HCT116 (cell line): ENCODE measurements at regions of chr7 and their contacts with region 1.

Region 1: DNA sequence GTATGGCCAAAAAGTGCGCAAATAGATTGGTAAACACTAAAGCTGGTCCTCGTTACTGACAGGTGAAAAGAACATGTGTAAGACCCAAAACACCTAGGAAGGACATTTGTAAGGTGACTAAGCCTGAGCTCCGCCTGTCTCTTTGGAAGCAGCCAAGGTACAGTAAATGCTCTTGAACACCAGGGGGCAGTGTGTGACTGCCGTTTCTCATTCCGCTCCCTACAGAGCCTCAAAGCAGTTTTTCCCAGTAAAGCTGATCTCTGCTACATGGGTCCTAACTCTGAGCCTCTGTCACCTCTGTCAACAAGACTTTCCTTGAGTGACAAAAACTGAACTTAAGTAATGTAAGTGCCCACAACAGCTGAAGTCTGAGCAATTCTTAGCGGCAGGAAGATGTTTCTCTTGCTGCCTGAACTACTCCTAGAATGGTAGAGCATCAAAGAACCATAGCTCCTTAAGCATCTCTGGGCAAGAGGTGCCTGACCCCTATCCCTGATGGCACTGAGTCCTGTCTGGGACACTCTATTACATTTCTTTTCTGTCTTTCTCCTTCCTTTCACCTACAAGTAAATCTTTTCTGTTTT is 238.0 kb upstream of the INHBA start:
- DNase-seq: peak; percentile 32
- ATAC-seq: peak; percentile 84
- H3K4me3 ChIP-seq: no peak overlapping the region
- H3K27ac ChIP-seq: no peak overlapping the region
- H3K4me1 ChIP-seq: no peaks in the 10 kb centered on the region
- H3K27me3 ChIP-seq: no peaks in the 10 kb centered on the region; the same call in 1 of the 2 replicates
- CTCF ChIP-seq: peak; percentile 55 to 87 (median 85); a peak in 5 of 6 replicates
- POLR2A ChIP-seq: no peak
- RAD21 ChIP-seq: peak; percentile 68

Region 2: DNA sequence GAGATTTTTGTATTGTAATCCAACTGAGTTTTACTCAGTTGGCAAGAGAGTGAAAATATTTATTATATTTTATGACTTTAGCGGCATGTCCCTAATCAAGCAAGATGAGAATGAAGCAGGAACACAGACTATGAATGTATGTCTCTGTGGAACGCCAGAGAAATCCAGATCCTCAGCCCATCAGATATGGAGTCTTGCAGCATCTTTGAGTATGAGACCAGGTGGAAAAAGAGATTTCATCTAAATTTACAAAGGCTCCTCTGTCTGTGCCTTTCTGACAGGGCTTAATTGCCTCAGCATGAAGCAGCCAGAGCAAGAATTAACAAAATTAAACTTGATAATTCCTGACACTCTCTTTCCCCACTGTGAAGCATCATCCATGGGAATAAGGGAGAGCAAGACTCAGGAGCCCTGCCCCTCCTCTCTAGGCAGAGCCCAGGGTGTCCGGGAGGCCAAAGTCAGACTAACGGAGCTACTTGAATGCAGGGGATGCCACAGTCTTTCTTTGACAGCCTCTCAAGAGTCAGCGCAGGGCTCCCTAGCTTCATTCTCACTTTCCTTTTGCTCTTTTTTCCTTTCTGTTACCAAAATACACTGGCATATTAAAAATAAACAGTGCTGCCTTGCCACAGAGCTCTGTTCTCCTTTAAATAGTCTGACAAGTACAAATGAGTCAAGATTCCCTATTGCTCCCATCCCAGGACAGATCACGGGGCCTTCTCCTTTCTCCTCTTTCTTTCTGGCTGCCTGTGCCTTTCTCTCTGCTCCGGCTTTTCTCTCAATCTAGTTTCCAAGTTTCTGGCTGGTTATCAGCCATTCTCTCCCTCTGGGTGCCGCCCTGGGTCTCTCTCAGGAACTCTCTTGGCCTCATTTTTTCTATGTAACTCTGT is 105.8 kb before region 1 on chr7:
- CTCF ChIA-PET with region 1: no interaction called
- POLR2A ChIA-PET with region 1: no interaction called
- RAD21 ChIA-PET with region 1: no interaction called
- intact Hi-C with region 1: no loop called
- DNase-seq: no peak
- ATAC-seq: no peak
- H3K4me3 ChIP-seq: no peak overlapping the region
- H3K27ac ChIP-seq: no peak overlapping the region
- H3K4me1 ChIP-seq: no peaks in the 10 kb centered on the region
- H3K27me3 ChIP-seq: no peaks in the 10 kb centered on the region
- CTCF ChIP-seq: no peak
- POLR2A ChIP-seq: no peak
- RAD21 ChIP-seq: no peak

Region 3: GRCh38 chr7:41955893-41956675 is 15.2 kb after region 1 on chr7:
- CTCF ChIA-PET with region 1: interaction called, 13 read pairs
- POLR2A ChIA-PET with region 1: no interaction called
- RAD21 ChIA-PET with region 1: no interaction called
- intact Hi-C with region 1: no loop called
- DNase-seq: no peak
- ATAC-seq: no peak
- H3K4me3 ChIP-seq: no peak overlapping the region
- H3K27ac ChIP-seq: no peak overlapping the region
- H3K4me1 ChIP-seq: no peaks in the 10 kb centered on the region
- H3K27me3 ChIP-seq: peaks cover 25% of the 10 kb centered on the region; the same call in 1 of the 2 replicates
- CTCF ChIP-seq: no peak
- POLR2A ChIP-seq: no peak
- RAD21 ChIP-seq: no peak

Region 4: GRCh38 chr7:42272793-42273665 is 332.2 kb after region 1 on chr7:
- CTCF ChIA-PET with region 1: no interaction called
- POLR2A ChIA-PET with region 1: no interaction called
- RAD21 ChIA-PET with region 1: no interaction called
- intact Hi-C with region 1: no loop called
- DNase-seq: no peak
- ATAC-seq: no peak
- H3K4me3 ChIP-seq: no peak overlapping the region
- H3K27ac ChIP-seq: no peak overlapping the region
- H3K4me1 ChIP-seq: no peaks in the 10 kb centered on the region
- H3K27me3 ChIP-seq: no peaks in the 10 kb centered on the region
- CTCF ChIP-seq: no peak
- POLR2A ChIP-seq: no peak
- RAD21 ChIP-seq: no peak

Region 5: GRCh38 chr7:42831718-42832431 is 891.0 kb after region 1 on chr7:
- CTCF ChIA-PET with region 1: interaction called, 13 read pairs
- POLR2A ChIA-PET with region 1: no interaction called
- RAD21 ChIA-PET with region 1: no interaction called
- intact Hi-C with region 1: no loop called
- DNase-seq: peak; percentile 7
- ATAC-seq: peak; percentile 82
- H3K4me3 ChIP-seq: no peak overlapping the region
- H3K27ac ChIP-seq: no peak overlapping the region
- H3K4me1 ChIP-seq: no peaks in the 10 kb centered on the region
- H3K27me3 ChIP-seq: peaks cover 53% of the 10 kb centered on the region
- CTCF ChIP-seq: peak; percentile 33 to 47 (median 46); a peak in 5 of 6 replicates
- POLR2A ChIP-seq: no peak
- RAD21 ChIP-seq: peak; percentile 61

Region 6: DNA sequence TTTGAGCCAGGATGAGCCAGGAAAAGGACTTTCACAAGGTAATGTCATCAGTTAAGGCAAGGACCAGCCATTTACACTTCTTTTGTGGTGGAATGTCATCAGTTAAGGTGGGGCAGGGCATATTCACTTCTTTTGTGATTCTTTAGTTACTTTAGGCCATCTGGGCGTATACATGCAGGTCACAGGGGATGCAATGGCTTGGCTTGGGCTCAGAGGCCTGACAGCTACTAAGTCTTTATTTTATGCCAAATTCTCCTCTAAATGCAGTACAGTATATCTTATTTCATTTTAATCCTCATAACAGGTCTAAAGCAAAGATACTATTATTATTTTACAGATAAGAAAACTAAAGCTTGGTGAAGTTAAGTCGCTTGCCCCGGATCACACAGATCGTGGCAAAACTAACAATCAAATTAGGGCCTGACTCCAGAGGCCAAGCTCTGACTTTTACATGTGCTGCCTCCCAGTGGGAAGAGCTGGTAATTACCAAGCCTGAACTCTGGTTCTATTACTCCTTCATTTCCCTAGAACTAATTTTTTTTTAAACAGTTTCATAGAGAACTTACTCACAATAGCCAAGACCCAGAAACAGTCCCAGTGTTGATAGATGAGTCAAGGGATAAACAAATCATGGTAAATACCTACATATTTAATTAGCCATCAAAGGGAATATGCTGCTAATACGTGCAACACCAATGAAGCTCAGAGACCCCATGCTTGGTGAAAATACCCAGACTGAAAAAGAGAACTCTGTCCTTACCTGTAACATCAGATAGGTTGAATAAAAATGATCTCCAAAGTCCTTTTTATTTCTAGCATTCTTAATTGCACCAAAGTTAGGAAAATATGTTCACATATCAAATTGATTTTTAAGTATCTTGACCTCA is 935.6 kb after region 1 on chr7:
- CTCF ChIA-PET with region 1: interaction called, 42 read pairs
- POLR2A ChIA-PET with region 1: interaction called, 3 read pairs
- RAD21 ChIA-PET with region 1: interaction called in 1 of 2 experiments, 4 read pairs
- intact Hi-C with region 1: loop called (anchors 2 kb)
- DNase-seq: peak; percentile 43
- ATAC-seq: peak; percentile 84
- H3K4me3 ChIP-seq: no peak overlapping the region
- H3K27ac ChIP-seq: no peak overlapping the region
- H3K4me1 ChIP-seq: no peaks in the 10 kb centered on the region
- H3K27me3 ChIP-seq: no peaks in the 10 kb centered on the region
- CTCF ChIP-seq: peak; percentile 36 to 78 (median 73); a peak in 5 of 6 replicates
- POLR2A ChIP-seq: no peak
- RAD21 ChIP-seq: peak; percentile 64

Region 7: GRCh38 chr7:43353902-43354301 is 1413.0 kb after region 1 on chr7:
- CTCF ChIA-PET with region 1: no interaction called
- POLR2A ChIA-PET with region 1: no interaction called
- RAD21 ChIA-PET with region 1: no interaction called
- intact Hi-C with region 1: loop called (anchors 10 kb)
- DNase-seq: peak; percentile 6
- ATAC-seq: no peak
- H3K4me3 ChIP-seq: no peak overlapping the region
- H3K27ac ChIP-seq: no peak overlapping the region
- H3K4me1 ChIP-seq: no peaks in the 10 kb centered on the region
- H3K27me3 ChIP-seq: no peaks in the 10 kb centered on the region
- CTCF ChIP-seq: peak; percentile 7 to 47 (median 20); a peak in 3 of 6 replicates
- POLR2A ChIP-seq: no peak
- RAD21 ChIP-seq: peak; percentile 54

Region 8: GRCh38 chr7:43454936-43455518 is 1514.2 kb after region 1 on chr7:
- CTCF ChIA-PET with region 1: no interaction called
- POLR2A ChIA-PET with region 1: no interaction called
- RAD21 ChIA-PET with region 1: no interaction called
- intact Hi-C with region 1: loop called (anchors 5 kb)
- DNase-seq: peak; percentile 19
- ATAC-seq: peak; percentile 81
- H3K4me3 ChIP-seq: no peak overlapping the region
- H3K27ac ChIP-seq: no peak overlapping the region
- H3K4me1 ChIP-seq: peaks cover 0 to 5% of the 10 kb centered on the region in 2 experiments; a peak in 2 of 4 replicates
- H3K27me3 ChIP-seq: no peaks in the 10 kb centered on the region
- CTCF ChIP-seq: peak; percentile 49 to 71 (median 68); a peak in 5 of 6 replicates
- POLR2A ChIP-seq: no peak
- RAD21 ChIP-seq: peak; percentile 73